CD8-positive, alpha-beta T cell (primary cell): ENCODE measurements at regions of chr16 and their contacts with region 1.

Region 1: GRCh38 chr16:71915350-71915749 is 20.0 kb downstream of the IST1 start:
- DNase-seq: no peak
- ATAC-seq: no peak
- H3K4me3 ChIP-seq: no peak overlapping the region
- H3K4me3 Mint-ChIP-seq: no peak overlapping the region
- H3K27ac ChIP-seq: peak overlapping the region in 1 of 2 experiments; percentile 13
- H3K27ac Mint-ChIP-seq: peak overlapping the region; percentile 21
- H3K4me1 ChIP-seq: peaks cover 13% of the 10 kb centered on the region
- H3K4me1 Mint-ChIP-seq: peaks cover 69% of the 10 kb centered on the region
- H3K27me3 ChIP-seq: no peaks in the 10 kb centered on the region
- H3K27me3 Mint-ChIP-seq: no peaks in the 10 kb centered on the region
- CTCF ChIP-seq: no peak

Region 2: DNA sequence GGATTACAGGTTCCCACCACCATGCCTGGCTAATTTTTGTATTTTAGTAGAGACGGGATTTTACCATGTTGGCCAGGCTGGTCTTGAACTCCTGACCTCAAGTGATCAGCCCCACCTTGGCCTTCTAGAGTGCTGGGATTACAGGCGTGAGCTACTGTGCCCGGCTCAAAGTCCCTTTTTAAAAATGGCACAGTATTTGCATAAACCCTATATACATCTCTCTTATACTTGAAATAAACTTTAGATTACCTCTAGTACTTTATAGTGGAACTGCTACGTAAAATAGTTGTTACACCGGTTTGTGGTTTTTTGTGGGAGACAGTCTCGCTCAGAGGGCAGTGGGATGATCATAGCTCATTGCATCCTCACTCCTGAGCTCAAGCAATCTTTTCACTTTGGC is 16.2 kb after region 1 on chr16:
- CTCF ChIA-PET with region 1: no interaction called
- POLR2A ChIA-PET with region 1: interaction called, 3 read pairs
- intact Hi-C with region 1: loop called in 1 of 2 experiments (anchors 1 kb)
- DNase-seq: no peak
- ATAC-seq: no peak
- H3K4me3 ChIP-seq: no peak overlapping the region
- H3K4me3 Mint-ChIP-seq: no peak overlapping the region
- H3K27ac ChIP-seq: no peak overlapping the region
- H3K27ac Mint-ChIP-seq: no peak overlapping the region
- H3K4me1 ChIP-seq: no peaks in the 10 kb centered on the region
- H3K4me1 Mint-ChIP-seq: peaks cover 16% of the 10 kb centered on the region
- H3K27me3 ChIP-seq: no peaks in the 10 kb centered on the region
- H3K27me3 Mint-ChIP-seq: no peaks in the 10 kb centered on the region
- CTCF ChIP-seq: no peak